Psoas muscle (tissue), 8 donors: ENCODE measurements at regions of chr21 and their contacts with region 1.

Region 1: DNA sequence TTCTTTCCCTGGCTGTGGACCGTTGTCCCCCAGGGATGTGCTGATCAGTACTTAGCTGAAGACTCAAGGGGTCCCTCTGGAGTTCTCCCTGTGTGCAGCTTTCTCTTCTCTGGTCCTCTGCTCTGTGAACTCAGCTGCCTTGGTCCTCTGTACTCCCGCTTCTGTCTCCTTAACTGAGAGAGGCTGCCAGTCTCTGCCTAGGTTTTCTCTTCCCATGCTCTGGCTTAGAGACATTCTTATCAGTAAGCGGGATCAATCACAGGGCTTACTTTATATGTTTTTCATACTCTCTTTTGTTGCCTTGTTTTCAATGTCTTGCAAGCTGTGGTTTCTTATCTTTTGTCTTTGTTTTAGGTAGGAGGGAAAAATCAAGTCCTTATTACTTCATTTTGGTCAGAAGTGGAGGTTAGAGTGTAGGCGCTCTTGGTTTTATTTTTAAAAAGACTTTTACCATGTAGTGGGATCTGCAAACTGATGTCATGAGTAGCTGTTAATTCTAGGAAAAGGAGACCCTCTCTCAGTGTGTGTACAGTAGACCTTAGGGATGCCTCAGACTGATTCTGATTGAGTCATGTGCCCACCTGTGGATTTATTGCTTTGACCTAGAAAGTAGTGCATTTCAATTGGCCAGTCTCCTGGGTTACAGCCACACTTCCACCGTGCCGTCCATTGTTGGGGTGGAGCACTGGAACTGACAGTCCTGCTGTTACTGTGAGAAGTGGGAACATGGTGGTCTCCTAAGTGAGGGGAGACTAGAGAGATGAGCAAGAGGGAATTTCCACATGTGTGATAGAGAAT is 46.6 kb downstream of the TTC3 start:
- DNase-seq: no peak
- ATAC-seq: no peak
- H3K4me3 ChIP-seq: no peak overlapping the region
- H3K27ac ChIP-seq: no peak overlapping the region
- H3K4me1 ChIP-seq: no peaks in the 10 kb centered on the region
- H3K27me3 ChIP-seq: no peaks in the 10 kb centered on the region
- CTCF ChIP-seq: no peak

Region 2: DNA sequence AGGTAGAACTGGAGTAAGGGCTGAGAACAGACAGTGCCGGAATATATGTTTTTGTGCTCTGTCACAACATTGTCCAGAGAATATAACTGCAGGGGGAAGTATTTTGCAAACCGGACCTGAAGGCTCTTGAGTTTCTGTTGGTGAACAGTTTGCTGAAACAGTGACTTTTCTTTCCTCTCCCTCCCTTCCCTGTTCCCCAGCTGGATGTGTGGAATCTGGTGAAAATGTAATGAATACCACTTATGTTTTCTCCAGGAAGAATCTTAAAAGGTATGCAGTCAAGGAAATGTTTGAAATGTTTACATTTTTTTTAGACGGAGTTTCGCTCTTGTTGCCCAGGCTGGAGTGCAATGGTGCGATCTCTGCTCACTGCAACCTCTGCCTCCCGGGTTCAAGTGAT is 711.1 kb before region 1 on chr21:
- intact Hi-C with region 1: loop called in 1 of 2 experiments (anchors 5 kb)
- DNase-seq: no peak
- ATAC-seq: no peak
- H3K4me3 ChIP-seq: no peak overlapping the region
- H3K27ac ChIP-seq: no peak overlapping the region
- H3K4me1 ChIP-seq: no peaks in the 10 kb centered on the region
- H3K27me3 ChIP-seq: no peaks in the 10 kb centered on the region
- CTCF ChIP-seq: no peak